Activated naive CD4-positive, alpha-beta T cell treated with anti-CD3 and anti-CD28 coated beads for 36 hours (primary cell): ENCODE measurements at regions of chr1 and their contacts with region 1.

Region 1: DNA sequence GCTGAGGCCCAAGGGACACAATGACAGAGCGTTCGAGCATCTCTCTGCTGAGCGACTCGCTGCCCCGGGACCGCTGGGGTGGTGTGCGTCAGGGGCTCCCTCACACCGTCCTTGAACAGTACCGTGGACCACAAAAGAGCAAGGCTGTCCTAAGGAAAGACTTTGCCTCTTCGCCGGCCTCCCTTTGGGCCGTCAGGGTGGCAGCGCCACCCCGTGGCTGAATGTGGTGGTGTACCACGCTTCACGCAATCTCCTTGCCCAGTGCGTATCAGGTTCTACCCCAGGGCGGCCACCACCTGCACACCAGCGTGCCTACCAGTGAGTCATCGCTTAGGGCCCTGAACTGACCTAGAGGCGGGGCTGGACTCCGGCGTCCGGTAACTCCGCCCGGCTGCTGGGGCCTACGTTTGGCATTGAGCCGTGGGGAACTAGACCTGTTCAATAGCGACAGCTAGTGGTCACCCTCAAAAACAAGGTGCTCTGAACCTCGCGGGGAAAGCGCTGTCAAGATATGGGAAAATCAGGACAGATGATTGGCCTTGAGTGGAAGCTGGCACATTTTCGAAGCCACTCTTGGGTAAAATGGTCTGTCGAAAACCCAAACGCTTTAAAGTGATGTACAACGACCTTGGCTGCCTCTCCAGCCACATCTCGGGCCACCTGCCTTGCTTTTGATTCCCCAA is 8.1 kb upstream of the TRAF3IP3 start:
- DNase-seq: peak; percentile 92
- H3K4me3 Mint-ChIP-seq: peak overlapping the region; percentile 66
- H3K27ac Mint-ChIP-seq: peak overlapping the region; percentile 91
- H3K4me1 Mint-ChIP-seq: peaks cover 71% of the 10 kb centered on the region
- H3K27me3 Mint-ChIP-seq: no peaks in the 10 kb centered on the region

Region 2: GRCh38 chr1:209576798-209577197 is 170.9 kb before region 1 on chr1:
- CTCF ChIA-PET with region 1: interaction called, 55 read pairs
- intact Hi-C with region 1: loop called (anchors 1 kb)
- DNase-seq: peak; percentile 83
- H3K4me3 Mint-ChIP-seq: no peak overlapping the region
- H3K27ac Mint-ChIP-seq: no peak overlapping the region
- H3K4me1 Mint-ChIP-seq: no peaks in the 10 kb centered on the region
- H3K27me3 Mint-ChIP-seq: no peaks in the 10 kb centered on the region

Region 3: DNA sequence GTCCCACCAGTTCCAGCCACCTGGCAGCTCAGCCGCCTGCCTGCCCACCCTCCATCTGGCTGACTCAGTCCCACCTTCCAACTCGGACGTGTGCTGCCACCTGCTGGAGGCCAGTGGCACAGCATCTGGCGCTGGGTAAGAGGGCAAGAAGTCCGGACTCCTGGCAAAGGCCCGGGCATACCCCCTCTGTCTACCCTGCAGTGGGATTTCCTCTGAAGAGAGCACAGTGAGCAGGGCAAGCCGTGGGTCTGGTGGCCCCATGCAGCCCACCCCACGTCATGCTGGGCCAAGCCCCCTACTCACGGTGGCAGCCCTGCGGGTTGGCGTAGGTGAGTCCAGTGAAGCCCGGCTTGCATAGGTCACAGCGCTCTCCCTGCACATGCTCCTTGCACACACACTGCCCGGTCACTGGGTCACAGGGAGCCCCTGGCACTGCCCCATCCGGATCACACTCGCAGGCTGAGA is 120.0 kb before region 1 on chr1:
- CTCF ChIA-PET with region 1: interaction called, 6 read pairs
- intact Hi-C with region 1: loop called (anchors 1 kb)
- DNase-seq: peak; percentile 89
- H3K4me3 Mint-ChIP-seq: no peak overlapping the region
- H3K27ac Mint-ChIP-seq: no peak overlapping the region
- H3K4me1 Mint-ChIP-seq: peaks cover 15% of the 10 kb centered on the region
- H3K27me3 Mint-ChIP-seq: no peaks in the 10 kb centered on the region

Region 4: GRCh38 chr1:209685821-209686220 is 61.9 kb before region 1 on chr1:
- CTCF ChIA-PET with region 1: interaction called, 17 read pairs
- intact Hi-C with region 1: no loop called
- DNase-seq: peak; percentile 74
- H3K4me3 Mint-ChIP-seq: peak overlapping the region; percentile 28
- H3K27ac Mint-ChIP-seq: no peak overlapping the region
- H3K4me1 Mint-ChIP-seq: peaks cover 47% of the 10 kb centered on the region
- H3K27me3 Mint-ChIP-seq: no peaks in the 10 kb centered on the region

Region 5: GRCh38 chr1:209733409-209734192 is 14.1 kb before region 1 on chr1:
- CTCF ChIA-PET with region 1: interaction called, 49 read pairs
- intact Hi-C with region 1: loop called (anchors 1 kb)
- DNase-seq: peak; percentile 35
- H3K4me3 Mint-ChIP-seq: peak overlapping the region; percentile 33
- H3K27ac Mint-ChIP-seq: peak overlapping the region; percentile 80
- H3K4me1 Mint-ChIP-seq: peaks cover 55% of the 10 kb centered on the region
- H3K27me3 Mint-ChIP-seq: no peaks in the 10 kb centered on the region

Region 6: GRCh38 chr1:209784265-209785169 is 36.8 kb after region 1 on chr1 and contains the start of gene C1orf74:
- CTCF ChIA-PET with region 1: interaction called, 3 read pairs
- intact Hi-C with region 1: loop called (anchors 1 kb)
- DNase-seq: peak; percentile 100
- H3K4me3 Mint-ChIP-seq: peak within 1 kb of the TSS; percentile 92
- H3K27ac Mint-ChIP-seq: peak within 1 kb of the TSS; percentile 97
- H3K4me1 Mint-ChIP-seq: peaks cover 37% of the 10 kb centered on the region
- H3K27me3 Mint-ChIP-seq: no peaks in the 10 kb centered on the region
- total RNA-seq, gene C1orf74: 3.5 to 4.6 TPM